ENCODE measurements at regions of chr19 and their contacts with region 1.

Region 1: DNA sequence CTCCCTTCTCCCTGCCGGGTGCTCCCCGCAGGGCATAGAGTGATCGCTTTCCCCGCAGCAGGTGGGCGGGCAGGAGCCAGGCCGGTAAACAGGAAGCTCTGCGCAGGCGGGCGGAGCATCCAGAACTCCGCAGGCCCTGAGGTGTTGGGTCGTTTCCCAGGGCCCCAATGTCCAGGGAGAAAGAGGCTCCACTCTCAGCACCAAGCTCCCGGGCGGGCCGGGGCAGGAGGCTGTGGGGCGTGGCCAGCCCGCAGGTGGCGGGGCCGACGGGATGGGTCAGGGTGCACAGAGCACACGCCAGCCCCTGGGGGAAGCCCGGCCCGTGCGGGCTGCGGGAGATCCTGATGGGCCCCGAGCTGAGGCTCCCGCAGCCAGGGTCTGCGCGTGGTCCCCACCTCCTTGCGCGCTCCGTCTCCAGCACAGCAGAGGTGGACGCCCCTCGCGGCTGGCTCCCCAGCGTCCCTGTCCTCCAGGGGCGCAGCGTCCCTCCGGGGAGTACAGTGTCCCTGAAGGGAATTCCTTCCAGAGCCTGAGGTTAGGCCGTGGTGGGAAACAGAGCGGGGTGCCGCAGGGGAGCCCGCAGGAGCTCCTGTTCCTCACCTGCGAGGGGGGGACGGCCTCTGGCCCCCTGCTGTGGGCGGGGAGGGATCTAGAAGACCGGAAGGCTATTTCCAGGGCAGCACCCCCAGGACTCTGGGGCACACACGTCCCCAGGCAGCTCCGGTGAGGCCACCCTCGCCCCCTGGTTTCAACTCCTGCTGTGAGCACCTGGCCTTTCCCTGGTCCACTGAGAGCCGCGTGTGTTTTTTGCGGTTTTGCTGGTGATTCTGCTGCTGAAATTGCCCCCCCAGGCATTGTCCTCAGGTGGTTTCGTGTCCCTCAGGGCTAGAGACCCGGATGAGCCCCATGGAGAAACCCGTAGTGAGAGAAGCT is 12.2 kb downstream of the PIP5K1C start:
- DNase-seq: peak; percentile 51
- ATAC-seq: peak; percentile 63
- H3K4me3 ChIP-seq: peak overlapping the region in 4 of 5 experiments; percentile 28 to 71 (median 60)
- H3K4me3 Mint-ChIP-seq: peak overlapping the region; percentile 88
- H3K27ac ChIP-seq: peak overlapping the region in 1 of 2 donors; percentile 73
- H3K27ac Mint-ChIP-seq: peak overlapping the region; percentile 94
- H3K4me1 ChIP-seq: peaks cover 31 to 33% of the 10 kb centered on the region in 2 donors
- H3K4me1 Mint-ChIP-seq: peaks cover 58% of the 10 kb centered on the region
- H3K27me3 ChIP-seq: no peaks in the 10 kb centered on the region
- H3K27me3 Mint-ChIP-seq: no peaks in the 10 kb centered on the region
- CTCF ChIP-seq: no peak

Region 2: GRCh38 chr19:3670796-3671679 is 17.0 kb before region 1 on chr19:
- CTCF ChIA-PET with region 1: interaction called, 8 read pairs
- POLR2A ChIA-PET with region 1: interaction called, 8 read pairs
- intact Hi-C with region 1: loop called (anchors 2 kb)
- DNase-seq: no peak
- ATAC-seq: peak; percentile 32
- H3K4me3 ChIP-seq: no peak overlapping the region
- H3K4me3 Mint-ChIP-seq: peak overlapping the region; percentile 75
- H3K27ac ChIP-seq: no peak overlapping the region
- H3K27ac Mint-ChIP-seq: no peak overlapping the region
- H3K4me1 ChIP-seq: peaks cover 21 to 24% of the 10 kb centered on the region in 2 donors
- H3K4me1 Mint-ChIP-seq: peaks cover 40% of the 10 kb centered on the region
- H3K27me3 ChIP-seq: peaks cover 0 to 19% (median 5%) of the 10 kb centered on the region in 4 experiments
- H3K27me3 Mint-ChIP-seq: no peaks in the 10 kb centered on the region
- CTCF ChIP-seq: no peak

Region 3: GRCh38 chr19:3700221-3701032 is 12.4 kb after region 1 on chr19 and contains the start of gene PIP5K1C:
- CTCF ChIA-PET with region 1: interaction called, 25 read pairs
- POLR2A ChIA-PET with region 1: interaction called, 19 read pairs
- intact Hi-C with region 1: loop called (anchors 1 kb)
- DNase-seq: peak; percentile 95
- ATAC-seq: peak; percentile 99
- H3K4me3 ChIP-seq: peak within 1 kb of the TSS; percentile 41 to 72 (median 70)
- H3K4me3 Mint-ChIP-seq: peak within 1 kb of the TSS; percentile 91
- H3K27ac ChIP-seq: peak within 1 kb of the TSS in 1 of 2 donors; percentile 42
- H3K27ac Mint-ChIP-seq: peak within 1 kb of the TSS; percentile 80
- H3K4me1 ChIP-seq: peaks cover 16 to 23% of the 10 kb centered on the region in 2 donors
- H3K4me1 Mint-ChIP-seq: peaks cover 28% of the 10 kb centered on the region
- H3K27me3 ChIP-seq: no peaks in the 10 kb centered on the region
- H3K27me3 Mint-ChIP-seq: peaks cover 2% of the 10 kb centered on the region
- CTCF ChIP-seq: peak; percentile 74
- total RNA-seq, gene PIP5K1C: 42.3 and 46.7 TPM in 2 replicates